WTC11 (cell line): ENCODE measurements at regions of chr10 and their contacts with region 1.

Region 1: DNA sequence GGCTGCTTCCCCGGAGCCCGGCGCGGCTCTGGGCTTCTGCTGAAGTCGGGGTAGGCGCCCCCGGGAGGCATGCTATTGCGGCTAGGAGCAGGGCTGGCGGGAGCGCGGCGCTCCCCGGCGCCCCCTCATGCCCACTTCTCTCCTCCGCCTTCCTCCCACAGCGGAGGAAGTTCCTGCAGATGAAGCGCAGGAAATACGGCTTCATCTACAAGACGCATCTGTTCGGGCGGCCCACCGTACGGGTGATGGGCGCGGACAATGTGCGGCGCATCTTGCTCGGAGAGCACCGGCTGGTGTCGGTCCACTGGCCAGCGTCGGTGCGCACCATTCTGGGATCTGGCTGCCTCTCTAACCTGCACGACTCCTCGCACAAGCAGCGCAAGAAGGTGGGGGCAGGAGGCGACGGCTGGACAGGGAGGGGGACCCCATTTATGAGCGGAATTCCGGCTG is 479 bp downstream of the CYP26A1 start:
- DNase-seq: peak; percentile 65
- ATAC-seq: peak; percentile 23
- H3K4me3 Mint-ChIP-seq: peak overlapping the region; percentile 89
- H3K27ac Mint-ChIP-seq: no peak overlapping the region
- H3K4me1 Mint-ChIP-seq: peaks cover 43% of the 10 kb centered on the region
- H3K27me3 Mint-ChIP-seq: peaks cover 92% of the 10 kb centered on the region
- CTCF ChIP-seq: no peak

Region 2: DNA sequence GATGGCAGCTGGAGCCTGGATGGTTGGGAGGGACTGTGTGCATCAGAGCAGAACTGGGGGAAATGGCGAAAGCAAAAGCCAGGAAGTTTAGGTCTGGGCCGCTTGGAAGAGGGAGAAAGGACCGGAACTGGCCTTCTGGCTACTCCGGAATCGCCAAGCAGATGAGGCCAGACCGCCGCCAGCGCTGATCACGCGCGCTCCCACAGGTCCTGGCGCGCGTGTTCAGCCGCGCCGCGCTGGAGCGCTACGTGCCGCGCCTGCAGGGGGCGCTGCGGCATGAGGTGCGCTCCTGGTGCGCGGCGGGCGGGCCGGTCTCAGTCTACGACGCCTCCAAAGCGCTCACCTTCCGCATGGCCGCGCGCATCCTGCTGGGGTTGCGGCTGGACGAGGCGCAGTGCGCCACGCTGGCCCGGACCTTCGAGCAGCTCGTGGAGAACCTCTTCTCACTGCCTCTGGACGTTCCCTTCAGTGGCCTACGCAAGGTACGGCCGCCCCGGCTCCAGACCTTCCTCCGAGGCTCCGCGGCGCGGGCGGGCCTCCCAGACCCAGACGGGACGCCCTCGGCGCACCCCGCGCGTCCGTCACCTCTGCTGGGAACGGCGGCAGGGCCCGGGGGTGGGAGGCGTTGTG is 11.5 kb before region 1 on chr10:
- CTCF ChIA-PET with region 1: interaction called, 106 read pairs
- POLR2A ChIA-PET with region 1: interaction called, 4 read pairs
- DNase-seq: peak; percentile 70
- ATAC-seq: peak; percentile 31
- H3K4me3 Mint-ChIP-seq: peak overlapping the region; percentile 67
- H3K27ac Mint-ChIP-seq: no peak overlapping the region
- H3K4me1 Mint-ChIP-seq: peaks cover 43% of the 10 kb centered on the region
- H3K27me3 Mint-ChIP-seq: peaks cover 99% of the 10 kb centered on the region
- CTCF ChIP-seq: peak; percentile 86

Region 3: DNA sequence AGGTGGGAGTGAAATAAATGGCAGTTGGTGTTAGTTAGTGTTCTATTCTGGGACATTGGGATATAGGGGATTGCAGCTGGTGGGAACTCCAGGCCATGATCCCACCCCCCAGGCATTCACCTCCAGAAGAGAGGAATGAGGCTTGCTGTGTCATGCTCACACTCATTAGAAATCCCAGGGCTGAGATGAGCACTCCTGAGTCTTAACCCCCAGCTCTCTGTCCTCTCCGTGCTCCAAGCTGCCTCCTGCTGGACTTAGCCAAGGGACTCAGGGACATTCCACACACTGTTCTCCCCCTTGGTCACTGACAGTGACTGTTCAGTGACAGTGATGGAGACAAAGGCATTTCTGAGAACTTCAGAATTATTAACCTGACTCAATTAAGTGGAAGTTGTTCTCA is 21.1 kb after region 1 on chr10:
- CTCF ChIA-PET with region 1: no interaction called
- POLR2A ChIA-PET with region 1: no interaction called
- DNase-seq: no peak
- ATAC-seq: peak; percentile 64
- H3K4me3 Mint-ChIP-seq: no peak overlapping the region
- H3K27ac Mint-ChIP-seq: no peak overlapping the region
- H3K4me1 Mint-ChIP-seq: peaks cover 5% of the 10 kb centered on the region
- H3K27me3 Mint-ChIP-seq: peaks cover 4% of the 10 kb centered on the region; the same call in 1 of the 2 replicates
- CTCF ChIP-seq: no peak